K562 (cell line): ENCODE measurements at regions of chr2 and their contacts with region 1.

Region 1: DNA sequence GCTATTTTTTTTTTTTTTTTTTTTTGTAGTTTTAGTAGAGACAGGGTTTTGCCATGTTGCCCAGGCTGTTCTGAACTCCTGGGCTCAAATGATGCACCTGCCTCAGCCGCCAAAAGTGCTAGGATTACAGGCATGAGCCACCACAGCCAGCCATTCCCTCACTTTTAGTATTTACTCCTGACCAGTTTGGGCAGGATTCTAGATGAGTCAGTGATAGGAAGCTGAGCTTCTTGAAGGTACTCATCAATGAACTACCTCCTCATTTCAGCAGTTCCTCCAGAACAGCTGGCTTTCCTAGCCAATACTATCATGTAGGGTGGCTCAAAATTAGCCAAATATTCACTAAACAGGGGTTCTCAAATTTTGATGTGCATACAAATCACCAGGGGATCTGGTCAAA is 57.2 kb downstream of the CYBRD1 start:
- DNase-seq: no peak
- ATAC-seq: peak; percentile 17; the same call in 2 of the 3 replicates
- H3K4me3 ChIP-seq: no peak overlapping the region
- H3K27ac ChIP-seq: no peak overlapping the region
- H3K4me1 ChIP-seq: peaks cover 0 to 3% of the 10 kb centered on the region in 2 experiments; a peak in 1 of 5 replicates
- H3K27me3 ChIP-seq: no peaks in the 10 kb centered on the region
- CTCF ChIP-seq: no peak
- EP300 ChIP-seq: no peak
- POLR2A ChIP-seq: no peak
- RAD21 ChIP-seq: no peak

Region 2: DNA sequence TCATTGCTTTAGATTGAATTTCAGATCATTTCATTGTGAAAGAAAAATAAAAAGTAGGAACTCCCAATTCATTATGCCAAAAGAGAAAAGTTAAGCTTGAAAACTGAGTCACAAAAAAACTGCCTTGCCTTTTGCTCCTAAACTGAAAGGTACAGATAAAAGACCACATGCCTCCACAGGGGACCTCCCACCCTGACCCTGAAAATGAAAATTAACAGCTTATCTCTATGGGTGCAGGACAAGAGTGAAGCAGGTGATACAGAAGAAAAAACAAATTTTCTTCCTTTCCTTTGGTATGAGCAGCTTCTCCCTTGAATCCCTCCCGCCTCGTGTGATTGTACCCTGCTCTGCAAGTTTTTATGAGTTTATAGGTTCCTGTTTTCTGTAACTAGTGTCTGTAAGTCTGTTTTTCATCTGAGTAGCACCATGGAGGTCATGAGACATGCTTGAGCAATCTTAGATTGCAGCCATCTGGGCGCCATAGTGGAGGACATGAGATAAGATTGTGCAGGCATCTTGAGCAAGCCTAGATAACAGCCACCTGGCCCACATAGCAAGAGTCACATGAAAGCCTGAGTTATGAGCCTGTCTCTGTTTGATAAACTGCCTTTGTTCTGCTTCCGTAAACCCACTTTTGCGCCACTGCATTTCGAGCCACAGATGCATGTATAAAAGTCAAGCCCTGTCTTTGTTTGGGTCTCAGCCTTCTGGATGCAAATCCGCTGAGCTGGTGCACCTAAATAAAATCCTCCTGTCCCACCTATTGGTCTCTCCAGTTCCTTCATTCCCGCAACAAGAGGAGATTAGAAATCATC is 51.5 kb after region 1 on chr2:
- CTCF ChIA-PET with region 1: no interaction called
- POLR2A ChIA-PET with region 1: no interaction called
- in situ Hi-C with region 1: no loop called
- intact Hi-C with region 1: no loop called
- DNase-seq: peak in 2 of 4 experiments; percentile 25 to 81
- ATAC-seq: peak; percentile 76
- H3K4me3 ChIP-seq: no peak overlapping the region
- H3K27ac ChIP-seq: no peak overlapping the region; the same call in 1 of the 3 replicates
- H3K4me1 ChIP-seq: peaks cover 0 to 2% of the 10 kb centered on the region in 2 experiments; a peak in 1 of 5 replicates
- H3K27me3 ChIP-seq: no peaks in the 10 kb centered on the region
- CTCF ChIP-seq: no peak
- EP300 ChIP-seq: peak; percentile 82
- POLR2A ChIP-seq: no peak
- RAD21 ChIP-seq: no peak

Region 3: DNA sequence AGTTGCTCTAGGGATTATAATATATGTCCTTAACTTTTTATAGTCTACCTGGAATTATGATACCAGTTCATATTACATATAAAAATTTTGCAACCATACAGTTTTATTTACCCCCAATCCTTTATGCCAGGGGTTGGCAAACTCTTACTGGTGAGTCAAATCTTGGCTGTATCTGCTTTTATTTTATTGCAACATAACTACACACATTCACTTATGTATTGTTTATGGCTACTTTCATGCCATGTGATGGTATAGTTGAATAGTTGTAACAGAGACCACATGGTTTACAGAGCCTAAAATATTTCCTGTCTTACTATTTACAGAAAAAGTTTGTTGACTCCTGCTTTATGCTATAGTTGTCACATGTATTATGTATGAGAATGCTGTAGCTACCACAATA is 549.0 kb after region 1 on chr2:
- CTCF ChIA-PET with region 1: interaction called, 7 read pairs
- POLR2A ChIA-PET with region 1: no interaction called
- in situ Hi-C with region 1: no loop called
- intact Hi-C with region 1: loop called (anchors 5 kb)
- DNase-seq: no peak
- ATAC-seq: no peak
- H3K4me3 ChIP-seq: no peak overlapping the region
- H3K27ac ChIP-seq: no peak overlapping the region
- H3K4me1 ChIP-seq: no peaks in the 10 kb centered on the region
- H3K27me3 ChIP-seq: peaks cover 2 to 5% of the 10 kb centered on the region in 2 experiments; a peak in 1 of 5 replicates
- CTCF ChIP-seq: no peak
- EP300 ChIP-seq: no peak
- POLR2A ChIP-seq: no peak
- RAD21 ChIP-seq: no peak